ENCODE measurements at regions of chrX and their contacts with region 1.

Region 1: DNA sequence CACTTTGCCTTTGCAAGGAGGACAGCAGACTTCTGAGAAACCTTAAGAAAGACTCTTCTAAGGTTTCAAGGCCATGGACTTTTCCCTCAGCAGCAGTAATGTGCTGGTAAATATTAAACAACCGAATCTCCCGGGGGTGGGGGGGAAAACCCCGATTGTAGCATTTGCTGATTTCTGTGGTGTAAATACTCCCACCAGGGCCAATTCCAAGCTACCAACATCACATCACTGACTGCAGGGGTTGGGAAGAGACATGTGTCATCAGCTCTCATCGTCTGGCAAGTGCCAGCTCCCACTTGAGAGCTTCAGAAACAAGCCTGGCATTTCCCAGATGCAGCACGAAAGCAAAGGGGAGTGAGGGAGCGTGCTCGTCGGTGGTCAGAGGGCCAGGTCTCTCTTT is 101.2 kb downstream of the BCOR start:
- DNase-seq: no peak
- ATAC-seq: peak in 2 of 4 donors; percentile 42 to 49
- H3K4me3 ChIP-seq: no peak overlapping the region
- H3K27ac ChIP-seq: no peak overlapping the region
- H3K4me1 ChIP-seq: no peaks in the 10 kb centered on the region
- H3K27me3 ChIP-seq: peaks cover 0 to 2% (median 0%) of the 10 kb centered on the region in 9 donors
- CTCF ChIP-seq: no peak
- POLR2A ChIP-seq: no peak

Region 2: DNA sequence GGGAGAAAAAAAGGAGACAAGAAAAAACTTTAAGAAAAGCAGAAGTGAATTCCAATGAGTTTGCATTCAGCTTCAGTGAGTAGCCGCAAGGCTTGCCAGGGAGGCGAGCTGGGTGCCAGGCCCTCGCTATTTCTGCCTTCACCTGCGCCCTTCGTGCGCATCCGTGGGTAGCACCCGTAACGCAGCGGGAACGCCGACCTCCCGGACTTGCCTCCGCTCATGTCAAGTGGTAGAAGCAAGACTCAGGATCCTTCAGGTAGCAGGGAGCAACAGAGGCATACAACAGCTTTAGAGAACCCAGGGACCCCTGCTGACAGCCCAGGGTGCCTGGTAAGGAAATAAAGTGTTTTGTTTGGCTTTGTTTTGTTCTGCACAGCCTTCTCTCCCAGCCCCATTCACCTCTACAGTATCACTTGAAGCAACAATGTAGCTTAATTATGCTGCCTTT is 241.2 kb after region 1 on chrX:
- intact Hi-C with region 1: no loop called
- DNase-seq: no peak
- ATAC-seq: no peak
- H3K4me3 ChIP-seq: no peak overlapping the region
- H3K27ac ChIP-seq: no peak overlapping the region
- H3K4me1 ChIP-seq: no peaks in the 10 kb centered on the region
- H3K27me3 ChIP-seq: peaks cover 0 to 5% (median 0%) of the 10 kb centered on the region in 9 donors
- CTCF ChIP-seq: no peak
- POLR2A ChIP-seq: no peak

Region 3: DNA sequence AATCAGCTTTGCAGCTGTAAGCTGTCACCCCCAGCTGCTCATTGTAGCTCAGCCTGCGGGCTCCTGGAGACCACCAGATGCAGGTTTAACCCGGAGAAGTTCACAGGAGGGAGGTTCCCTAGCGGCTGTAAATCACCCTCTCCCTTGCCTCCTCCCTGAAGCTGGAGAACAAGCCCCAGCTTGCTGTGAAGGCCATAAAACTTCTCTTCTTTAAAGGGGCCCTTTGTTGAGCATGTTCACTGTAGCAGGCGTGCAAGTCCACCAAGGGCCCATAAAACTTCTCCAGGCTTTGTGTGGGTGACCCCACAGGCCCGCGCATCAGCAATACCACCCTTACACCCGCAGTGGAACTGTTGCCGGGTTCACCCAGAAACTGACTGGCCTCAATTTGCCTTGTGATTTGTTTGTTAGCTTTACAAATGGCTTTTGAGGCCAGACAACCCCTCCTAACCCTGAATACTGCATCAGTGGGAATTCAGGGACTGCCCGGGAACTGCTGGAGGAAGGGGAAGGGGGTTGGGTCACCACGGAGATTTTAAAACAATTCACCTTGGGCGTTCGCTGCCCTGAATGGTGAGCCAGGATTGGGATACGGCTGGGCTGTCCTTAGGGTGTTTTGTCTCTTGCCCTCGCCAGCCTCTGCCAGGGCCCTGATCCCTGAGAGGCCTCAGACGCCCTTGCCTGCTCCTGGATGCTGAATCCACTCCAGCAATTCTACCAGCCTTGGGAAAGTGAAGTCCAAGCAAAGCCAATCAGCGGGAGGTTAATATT is 534.7 kb after region 1 on chrX:
- intact Hi-C with region 1: loop called in 1 of 10 experiments (anchors 5 kb)
- DNase-seq: peak in 1 of 5 donors; percentile 32
- ATAC-seq: peak in 1 of 4 donors; percentile 26
- H3K4me3 ChIP-seq: no peak overlapping the region
- H3K27ac ChIP-seq: no peak overlapping the region
- H3K4me1 ChIP-seq: no peaks in the 10 kb centered on the region
- H3K27me3 ChIP-seq: peaks cover 0 to 66% (median 0%) of the 10 kb centered on the region in 9 donors
- CTCF ChIP-seq: no peak
- POLR2A ChIP-seq: no peak